Dendritic cell treated with granulocyte-macrophage colony-stimulating factor and Interleukin-4, amounts not matched to agents 40 ng/mL and 50 ng/mL, for 4 days (primary cell): ENCODE measurements at regions of chr1 and their contacts with region 1.

Region 1: DNA sequence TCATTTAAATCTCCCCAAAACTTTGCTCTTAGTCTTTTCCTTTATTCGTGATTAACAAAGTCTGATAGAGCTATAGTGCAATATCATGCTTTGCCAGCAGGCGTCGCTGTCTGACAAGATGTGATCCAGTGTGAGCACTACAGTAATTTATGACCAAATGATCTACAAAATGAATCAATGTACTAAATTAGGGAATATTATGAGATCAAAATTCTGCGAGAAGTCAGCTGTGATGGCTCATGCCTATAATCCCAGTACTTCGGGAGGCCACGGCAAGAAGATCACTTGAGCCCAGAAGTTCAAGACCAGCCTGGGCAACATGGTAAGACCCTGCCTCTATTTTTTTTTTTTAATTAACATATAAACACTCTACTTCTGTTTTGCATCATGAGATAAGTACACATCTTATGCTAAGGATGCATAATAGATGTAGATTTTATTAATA is 3.6 kb upstream of the SPSB1 start:
- H3K4me3 Mint-ChIP-seq: no peak overlapping the region
- H3K27ac Mint-ChIP-seq: no peak overlapping the region
- H3K4me1 Mint-ChIP-seq: peaks cover 21% of the 10 kb centered on the region
- H3K27me3 Mint-ChIP-seq: peaks cover 9% of the 10 kb centered on the region

Region 2: DNA sequence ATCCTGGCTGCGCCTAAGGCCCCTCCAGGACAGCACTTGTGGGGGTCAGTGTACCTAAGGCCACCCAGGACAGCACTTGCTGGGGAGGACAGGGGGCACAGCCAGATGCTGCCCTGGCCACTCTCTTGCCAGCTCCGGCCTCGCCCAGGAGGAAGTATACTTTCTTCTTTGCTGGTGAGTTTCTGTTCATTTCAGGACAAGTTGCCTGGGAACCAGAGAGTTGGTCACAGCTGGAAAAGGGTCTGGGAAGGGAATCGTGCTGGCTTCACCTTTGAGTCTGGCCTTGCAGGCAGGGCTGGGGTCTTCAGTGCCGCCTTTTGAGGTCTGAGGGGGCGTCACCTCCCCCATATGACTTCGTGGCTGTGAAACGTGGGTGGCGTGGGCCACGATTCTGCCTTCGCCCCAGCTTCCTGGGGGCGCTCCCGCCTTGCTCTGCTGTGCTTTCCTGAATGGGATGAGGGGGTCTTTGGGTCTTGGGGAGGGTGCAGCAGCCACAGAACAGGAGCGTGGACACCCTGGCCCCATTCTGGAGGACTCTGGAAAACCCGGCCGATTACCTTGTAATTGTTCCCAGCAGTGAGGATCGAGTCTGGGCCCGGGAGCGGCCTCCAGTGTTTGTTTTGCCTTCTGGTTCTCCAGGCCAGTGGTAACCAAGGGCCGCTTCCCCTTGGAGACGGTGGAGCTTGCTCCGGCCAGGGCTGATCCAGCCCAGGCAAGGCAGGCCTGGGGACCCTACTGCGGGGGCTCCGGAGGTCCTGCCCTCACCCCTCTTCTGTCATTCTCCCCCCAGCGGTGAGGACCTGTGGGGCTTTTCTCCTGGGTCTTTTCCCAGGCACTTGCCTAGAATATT is 49.5 kb after region 1 on chr1:
- intact Hi-C with region 1: no loop called
- H3K4me3 Mint-ChIP-seq: no peak overlapping the region
- H3K27ac Mint-ChIP-seq: peak overlapping the region; percentile 80
- H3K4me1 Mint-ChIP-seq: peaks cover 53% of the 10 kb centered on the region
- H3K27me3 Mint-ChIP-seq: peaks cover 22% of the 10 kb centered on the region

Region 3: GRCh38 chr1:9376886-9377333 is 87.8 kb after region 1 on chr1:
- intact Hi-C with region 1: no loop called
- H3K4me3 Mint-ChIP-seq: no peak overlapping the region
- H3K27ac Mint-ChIP-seq: no peak overlapping the region
- H3K4me1 Mint-ChIP-seq: peaks cover 12% of the 10 kb centered on the region
- H3K27me3 Mint-ChIP-seq: peaks cover 7% of the 10 kb centered on the region

Region 4: GRCh38 chr1:9413148-9413876 is 124.2 kb after region 1 on chr1:
- intact Hi-C with region 1: no loop called
- H3K4me3 Mint-ChIP-seq: no peak overlapping the region
- H3K27ac Mint-ChIP-seq: no peak overlapping the region
- H3K4me1 Mint-ChIP-seq: no peaks in the 10 kb centered on the region
- H3K27me3 Mint-ChIP-seq: peaks cover 2% of the 10 kb centered on the region

Region 5: DNA sequence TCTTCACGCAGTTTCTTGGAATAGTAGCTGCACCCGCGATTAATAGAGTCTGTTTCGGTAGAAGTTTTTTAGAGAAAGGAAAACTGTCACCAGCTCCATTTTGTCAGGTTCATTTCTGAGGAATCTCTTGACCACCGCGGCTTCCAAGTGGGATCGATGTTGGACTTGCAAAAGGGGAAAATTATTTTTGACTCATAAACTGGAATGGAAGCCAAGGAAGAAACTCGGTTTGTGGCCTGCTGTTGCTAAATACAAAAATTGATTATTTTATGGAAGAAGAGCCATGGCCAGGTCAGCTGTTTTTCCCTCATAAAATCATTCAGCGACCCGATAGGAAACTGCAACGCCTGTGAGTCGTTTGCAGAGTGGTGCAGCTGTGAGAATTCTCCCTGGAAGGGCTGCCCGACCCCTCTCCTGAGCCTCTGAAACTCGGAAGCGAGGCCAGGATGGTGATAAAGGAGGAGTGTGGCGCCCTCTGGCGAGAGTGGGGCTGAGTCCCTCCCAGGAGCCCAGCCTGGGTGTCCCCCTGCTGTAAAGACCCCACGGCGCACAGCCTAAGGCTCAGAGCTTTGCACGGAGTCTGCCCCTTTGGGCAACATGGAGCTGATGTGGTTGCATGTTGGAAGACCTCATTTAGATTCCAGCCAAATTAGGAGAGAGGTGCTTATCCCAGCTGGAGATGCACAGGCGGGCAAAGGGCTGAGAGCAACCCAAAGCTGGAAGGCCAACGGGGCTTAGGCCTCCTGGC is 166.5 kb after region 1 on chr1:
- intact Hi-C with region 1: loop called (anchors 1 kb)
- H3K4me3 Mint-ChIP-seq: no peak overlapping the region
- H3K27ac Mint-ChIP-seq: no peak overlapping the region
- H3K4me1 Mint-ChIP-seq: no peaks in the 10 kb centered on the region
- H3K27me3 Mint-ChIP-seq: peaks cover 8% of the 10 kb centered on the region